AG04449 (cell line): ENCODE measurements at regions of chr6 and their contacts with region 1.

Region 1: DNA sequence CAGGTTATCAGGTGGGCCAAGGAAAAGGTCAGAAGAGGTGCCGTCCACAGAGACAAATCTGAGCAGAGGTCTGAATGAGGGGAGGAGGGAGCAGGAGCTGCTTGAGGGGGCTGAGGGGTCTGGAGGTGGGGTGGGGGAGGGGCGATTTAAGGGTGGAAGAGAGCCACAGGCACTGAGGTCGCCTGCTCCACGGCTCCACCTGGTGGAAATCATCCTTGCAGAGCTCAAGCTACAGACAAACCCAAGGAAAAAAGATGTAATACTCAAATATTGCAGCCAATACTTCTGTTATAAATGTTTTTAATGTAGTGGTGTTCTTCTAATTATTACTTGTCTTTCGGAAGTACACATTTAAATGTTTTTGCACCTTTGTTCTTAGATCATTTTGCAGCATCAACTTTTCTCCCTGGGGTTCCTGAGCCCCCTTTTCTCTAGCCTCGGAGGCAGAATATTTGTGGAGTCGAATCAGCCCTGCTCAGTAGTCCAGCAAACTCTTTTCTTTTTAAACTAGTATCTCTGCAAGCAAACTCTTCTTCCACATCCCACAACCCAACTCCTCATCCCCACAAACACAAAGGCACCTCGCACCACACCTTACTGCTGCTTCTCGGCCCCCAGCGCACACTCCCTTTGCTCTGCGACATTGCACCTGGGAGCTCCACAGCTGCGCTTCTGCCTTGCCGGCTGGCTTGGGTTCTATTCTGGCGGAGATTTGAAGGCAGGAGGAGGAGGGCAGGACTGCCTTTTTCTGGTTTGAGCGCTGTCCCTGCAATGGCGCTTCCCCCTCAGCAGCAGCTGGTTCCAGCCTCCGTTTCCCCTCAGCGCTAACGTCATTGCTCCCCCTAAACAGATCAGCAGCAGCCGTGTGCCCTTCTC is 51.0 kb upstream of the TFAP2A start:
- DNase-seq: no peak
- H3K4me3 ChIP-seq: no peak overlapping the region
- CTCF ChIP-seq: peak; percentile 42

Region 2: GRCh38 chr6:10478187-10479040 is 12.5 kb after region 1 on chr6:
- CTCF ChIA-PET with region 1: interaction called, 35 read pairs
- POLR2A ChIA-PET with region 1: interaction called, 3 read pairs
- DNase-seq: no peak
- H3K4me3 ChIP-seq: no peak overlapping the region
- CTCF ChIP-seq: peak; percentile 28

Region 3: DNA sequence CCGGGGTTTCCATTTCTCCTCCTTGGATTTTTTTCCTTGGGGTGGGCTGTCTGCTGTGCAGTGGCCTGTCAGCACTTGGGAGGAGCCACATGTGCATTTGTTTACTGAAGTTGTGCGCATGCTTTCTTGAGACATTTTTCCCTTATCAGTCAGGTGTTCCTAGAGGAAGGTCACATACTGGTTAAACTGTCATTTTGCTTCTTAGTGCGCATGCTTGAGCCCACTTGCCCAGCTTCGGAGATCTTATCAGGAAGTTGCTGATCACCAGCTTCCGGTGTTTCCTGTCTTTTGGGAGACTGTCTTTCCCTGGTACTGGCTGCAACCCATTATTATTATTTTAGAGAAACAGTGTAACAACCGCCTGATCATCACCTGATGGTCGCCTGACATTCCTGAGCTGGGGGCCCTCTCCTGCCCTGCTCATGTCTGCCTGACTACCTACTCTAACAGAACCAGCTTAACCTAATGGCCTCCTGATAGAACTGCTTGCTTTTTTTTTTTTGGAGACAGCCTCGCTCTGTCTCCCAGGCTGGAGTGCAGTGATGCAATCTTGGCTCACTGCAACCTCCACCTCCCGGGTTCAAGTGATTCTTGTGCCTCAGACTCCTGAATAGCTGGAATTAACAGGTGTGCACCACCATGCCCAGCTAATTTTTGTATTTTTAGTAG is 646.0 kb after region 1 on chr6:
- CTCF ChIA-PET with region 1: no interaction called
- POLR2A ChIA-PET with region 1: no interaction called
- DNase-seq: no peak
- H3K4me3 ChIP-seq: no peak overlapping the region
- CTCF ChIP-seq: no peak